Cardiac septum (tissue), 1 donor: ENCODE measurements at regions of chr21 and their contacts with region 1.

Region 1: GRCh38 chr21:33588485-33589335 is at the start of gene DONSON:
- DNase-seq: peak; percentile 96
- total RNA-seq, gene DONSON: 8.2 TPM

Region 2: GRCh38 chr21:33542640-33543504 is 45.8 kb before region 1 on chr21 and contains the start of gene SON:
- intact Hi-C with region 1: loop called (anchors 2 kb)
- DNase-seq: peak; percentile 100
- total RNA-seq, gene SON: 212 TPM

Region 3: GRCh38 chr21:33655591-33656221 is 67.0 kb after region 1 on chr21:
- intact Hi-C with region 1: no loop called
- DNase-seq: no peak